ENCODE measurements at regions of chr15 and their contacts with region 1.

Region 1: GRCh38 chr15:65094294-65094995 is 17.9 kb downstream of the KBTBD13 start:
- DNase-seq: peak in 1 of 2 donors; percentile 72
- H3K4me3 ChIP-seq: no peak overlapping the region
- H3K27ac ChIP-seq: peak overlapping the region; percentile 48 to 74
- H3K4me1 ChIP-seq: no peaks in the 10 kb centered on the region
- H3K27me3 ChIP-seq: no peaks in the 10 kb centered on the region
- CTCF ChIP-seq: no peak
- POLR2A ChIP-seq: no peak

Region 2: DNA sequence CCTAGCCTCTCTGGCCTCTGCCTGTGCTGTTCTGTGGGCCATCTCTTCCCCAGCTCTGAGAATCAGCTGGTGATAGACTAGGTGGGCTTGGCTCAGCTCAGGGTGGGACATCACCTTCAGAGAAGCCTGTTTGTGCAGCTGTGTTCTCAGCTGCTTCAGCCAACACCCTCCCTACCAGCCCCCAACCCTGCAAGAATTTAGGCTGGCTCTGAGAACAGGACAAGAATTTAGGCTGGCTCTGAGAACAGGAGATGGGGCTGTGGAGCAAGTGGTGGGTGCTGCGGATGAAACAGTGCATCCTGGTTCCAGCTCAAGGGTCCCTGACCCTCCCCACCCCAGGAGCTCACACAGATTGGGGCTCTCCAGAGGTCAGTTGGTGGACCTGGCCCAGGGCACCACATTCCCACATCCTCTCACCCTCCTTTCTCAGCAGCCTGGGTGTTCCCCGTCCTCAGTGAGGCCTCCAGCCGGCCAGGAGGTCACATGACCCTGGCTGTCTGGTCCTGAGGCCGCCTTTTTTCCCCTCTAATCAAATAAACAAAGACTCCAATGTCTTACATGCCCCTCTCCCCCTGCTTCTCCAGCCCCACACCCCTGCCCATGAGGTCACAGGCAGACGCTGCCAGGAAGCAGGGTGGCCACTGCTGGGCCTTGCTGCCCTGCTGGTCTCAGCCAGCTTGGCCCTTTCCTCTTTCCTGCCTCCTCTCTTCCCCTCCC is 237.9 kb before region 1 on chr15:
- intact Hi-C with region 1: no loop called
- DNase-seq: no peak
- H3K4me3 ChIP-seq: no peak overlapping the region
- H3K27ac ChIP-seq: peak overlapping the region; percentile 33 to 76
- H3K4me1 ChIP-seq: peaks cover 0 to 7% of the 10 kb centered on the region in 2 donors
- H3K27me3 ChIP-seq: no peaks in the 10 kb centered on the region
- CTCF ChIP-seq: no peak
- POLR2A ChIP-seq: no peak

Region 3: GRCh38 chr15:65032801-65033537 is 61.5 kb before region 1 on chr15:
- intact Hi-C with region 1: loop called (anchors 10 kb)
- DNase-seq: no peak
- H3K4me3 ChIP-seq: no peak overlapping the region
- H3K27ac ChIP-seq: no peak overlapping the region
- H3K4me1 ChIP-seq: peaks cover 0 to 7% of the 10 kb centered on the region in 2 donors
- H3K27me3 ChIP-seq: no peaks in the 10 kb centered on the region
- CTCF ChIP-seq: peak in 2 of 3 donors; percentile 36 to 48
- POLR2A ChIP-seq: no peak

Measured in breast epithelium (tissue), 4 donors.